Activated CD4-positive, alpha-beta T cell treated with anti-CD3 and anti-CD28 coated beads for 36 hours (primary cell): ENCODE measurements at regions of chr1 and their contacts with region 1.

Region 1: DNA sequence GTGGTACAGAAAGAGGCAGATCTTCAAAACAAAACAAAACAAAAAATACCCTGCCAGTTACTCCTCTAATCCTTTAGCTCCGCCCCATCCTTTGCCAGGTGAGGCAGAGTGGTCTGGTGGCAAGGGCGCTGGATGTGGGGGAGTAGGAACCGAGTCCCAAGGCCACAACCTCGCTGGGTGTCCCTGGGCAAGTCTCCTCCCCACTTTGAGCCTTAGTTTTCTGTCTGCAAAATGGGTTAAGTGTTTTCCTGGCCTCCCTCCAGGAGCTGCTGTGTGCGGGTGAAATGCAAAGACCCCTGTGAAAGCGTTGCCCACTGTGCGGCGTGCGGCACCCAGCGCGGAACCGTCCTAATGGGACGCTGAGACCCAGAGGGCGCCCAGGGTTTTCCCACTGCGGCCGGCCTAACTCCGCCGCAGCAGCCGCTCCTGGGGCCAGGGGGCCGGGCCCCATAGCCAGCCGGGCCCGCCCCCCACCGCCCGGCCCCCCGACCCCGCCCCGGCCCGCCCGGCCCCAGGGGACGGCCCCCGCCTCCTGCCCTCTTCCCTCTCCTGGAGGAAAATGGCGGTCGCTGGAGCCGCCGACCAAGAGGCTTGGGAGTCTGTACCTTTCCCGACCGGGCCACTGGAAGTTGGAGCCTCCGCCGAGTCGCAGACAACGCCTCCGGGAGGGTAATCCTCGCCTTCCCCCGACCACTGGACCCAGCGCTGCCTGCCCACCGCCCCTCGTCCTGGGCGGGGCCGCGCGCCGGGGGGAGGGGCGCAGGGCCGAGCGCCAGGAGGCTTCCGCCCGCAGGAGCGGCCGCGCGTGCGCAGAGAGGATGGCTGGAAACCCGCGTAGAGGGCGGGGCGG is at the starts of genes ERMAP and SVBP:
- DNase-seq: peak; percentile 98
- ATAC-seq: peak; percentile 90
- H3K4me3 Mint-ChIP-seq: peak within 1 kb of the TSS; percentile 77
- H3K27ac Mint-ChIP-seq: peak within 1 kb of the TSS; percentile 84
- H3K4me1 Mint-ChIP-seq: peaks cover 16% of the 10 kb centered on the region
- H3K27me3 Mint-ChIP-seq: peaks cover 2% of the 10 kb centered on the region
- total RNA-seq, gene ERMAP: 4.5 to 6.4 TPM
- total RNA-seq, gene SVBP: 14.5 to 14.6 TPM

Region 2: DNA sequence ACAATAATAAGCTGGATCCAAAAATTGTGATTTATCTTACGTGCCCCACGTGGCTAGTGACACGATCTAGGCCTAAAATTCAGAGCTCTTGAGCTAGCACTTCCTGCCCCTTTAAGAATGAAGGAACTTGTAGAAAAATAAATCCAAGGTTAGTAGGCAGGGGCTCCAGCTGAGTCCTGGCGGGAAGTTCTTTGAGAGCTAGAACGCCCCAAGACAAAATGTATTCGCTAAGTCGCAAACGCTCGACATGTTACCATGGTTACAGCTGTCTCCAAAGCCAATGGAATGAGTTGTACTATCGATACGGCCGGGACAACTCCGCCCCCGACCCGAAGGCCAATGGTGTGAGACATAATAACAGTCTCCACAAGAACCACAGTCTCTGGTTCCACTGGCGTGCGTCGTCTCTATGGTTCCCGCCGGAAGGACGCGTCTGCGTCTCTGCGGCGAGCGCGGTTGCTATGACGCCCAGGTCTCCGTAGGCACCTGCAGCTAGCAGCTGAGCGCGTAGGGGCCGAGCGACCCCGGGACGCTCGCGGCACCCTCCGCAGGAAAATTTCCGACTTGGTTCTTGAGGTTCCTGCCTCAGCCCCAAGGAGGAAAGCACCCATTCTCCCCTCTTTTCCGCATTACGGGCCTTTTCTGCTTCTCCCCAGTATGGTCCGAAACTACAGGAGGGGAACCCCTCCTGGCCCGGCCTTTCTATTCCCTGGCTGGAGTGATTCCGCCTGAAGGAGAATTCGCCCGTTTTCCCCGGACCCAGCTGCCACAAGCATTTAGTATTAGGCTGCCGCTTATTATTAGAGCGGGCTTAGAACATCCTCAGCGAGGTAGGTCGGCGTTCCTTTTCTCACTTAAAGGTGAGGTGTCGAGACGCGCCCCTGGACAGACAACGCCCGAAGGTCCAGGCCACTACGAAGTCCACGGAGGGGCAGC is 353.7 kb before region 1 on chr1 and contains the start of gene CCDC30:
- CTCF ChIA-PET with region 1: no interaction called
- POLR2A ChIA-PET with region 1: no interaction called
- intact Hi-C with region 1: loop called in 1 of 2 experiments (anchors 1 kb)
- DNase-seq: peak; percentile 97
- ATAC-seq: peak; percentile 100
- H3K4me3 Mint-ChIP-seq: peak within 1 kb of the TSS; percentile 77
- H3K27ac Mint-ChIP-seq: peak within 1 kb of the TSS; percentile 73
- H3K4me1 Mint-ChIP-seq: peaks cover 31% of the 10 kb centered on the region
- H3K27me3 Mint-ChIP-seq: no peaks in the 10 kb centered on the region
- total RNA-seq, gene CCDC30: 1.3 to 2.3 TPM

Region 3: GRCh38 chr1:42657971-42658879 is 158.6 kb before region 1 on chr1 and contains the start of gene PPIH:
- CTCF ChIA-PET with region 1: no interaction called
- POLR2A ChIA-PET with region 1: no interaction called
- intact Hi-C with region 1: loop called in 1 of 2 experiments (anchors 1 kb)
- DNase-seq: peak; percentile 98
- ATAC-seq: peak; percentile 97
- H3K4me3 Mint-ChIP-seq: peak within 1 kb of the TSS; percentile 97
- H3K27ac Mint-ChIP-seq: peak within 1 kb of the TSS; percentile 97
- H3K4me1 Mint-ChIP-seq: peaks cover 39% of the 10 kb centered on the region
- H3K27me3 Mint-ChIP-seq: no peaks in the 10 kb centered on the region
- total RNA-seq, gene PPIH: 111 to 114 TPM

Region 4: DNA sequence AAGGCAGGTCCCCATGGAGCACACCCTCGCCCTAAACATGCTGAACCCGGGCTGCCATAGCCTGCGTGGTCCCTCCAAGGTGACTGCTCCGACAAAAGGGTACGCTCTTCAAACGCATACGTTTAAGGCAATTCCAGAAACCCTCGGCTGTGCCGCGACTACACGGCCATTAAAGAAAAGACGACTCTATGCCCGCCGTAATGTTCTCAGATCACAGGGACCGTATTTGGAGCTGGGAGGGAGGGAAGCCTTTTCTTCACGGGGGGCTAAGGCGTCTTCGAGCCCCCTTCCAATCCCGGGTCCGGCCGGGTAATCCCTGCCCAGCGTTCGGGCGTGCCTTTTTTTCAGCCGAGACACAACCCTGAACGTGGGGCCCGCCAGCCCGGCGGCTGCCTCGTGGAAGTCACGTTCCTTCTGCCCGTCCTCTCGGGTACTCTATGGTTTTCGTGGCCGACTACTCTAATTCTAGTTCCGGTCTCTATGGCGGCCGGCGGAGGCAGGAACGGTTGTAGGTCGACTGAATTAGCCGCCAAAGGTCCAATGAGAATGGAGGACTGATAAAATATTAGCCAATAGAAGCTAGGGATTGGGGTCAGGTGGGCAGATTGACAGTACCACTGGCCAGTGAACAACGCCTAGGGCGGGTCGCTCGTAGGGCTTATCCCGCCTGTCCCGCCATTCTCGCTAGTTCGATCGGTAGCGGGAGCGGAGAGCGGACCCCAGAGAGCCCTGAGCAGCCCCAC is 134.9 kb before region 1 on chr1 and contains the start of gene YBX1:
- CTCF ChIA-PET with region 1: no interaction called
- POLR2A ChIA-PET with region 1: no interaction called
- intact Hi-C with region 1: loop called in 1 of 2 experiments (anchors 2 kb)
- DNase-seq: peak; percentile 96
- ATAC-seq: peak; percentile 97
- H3K4me3 Mint-ChIP-seq: peak within 1 kb of the TSS; percentile 93
- H3K27ac Mint-ChIP-seq: peak within 1 kb of the TSS; percentile 97
- H3K4me1 Mint-ChIP-seq: peaks cover 41% of the 10 kb centered on the region
- H3K27me3 Mint-ChIP-seq: no peaks in the 10 kb centered on the region
- total RNA-seq, gene YBX1: 1,224 to 1,435 TPM